PC-3 (cell line): ENCODE measurements at regions of chr4 and their contacts with region 1.

Region 1: GRCh38 chr4:61933527-61933926 is 733.4 kb downstream of the ADGRL3 start:
- DNase-seq: no peak
- ATAC-seq: peak; percentile 5; the same call in 1 of the 2 replicates
- H3K4me3 ChIP-seq: peak overlapping the region; percentile 14; the same call in 1 of the 2 replicates
- H3K27ac ChIP-seq: peak overlapping the region; percentile 63
- H3K4me1 ChIP-seq: peaks cover 28% of the 10 kb centered on the region
- H3K27me3 ChIP-seq: no peaks in the 10 kb centered on the region
- CTCF ChIP-seq: no peak

Region 2: GRCh38 chr4:60682901-60683300 is 1250.6 kb before region 1 on chr4:
- CTCF ChIA-PET with region 1: no interaction called
- POLR2A ChIA-PET with region 1: interaction called, 10 read pairs
- intact Hi-C with region 1: no loop called
- DNase-seq: peak; percentile 65
- ATAC-seq: peak; percentile 81
- H3K4me3 ChIP-seq: no peak overlapping the region
- H3K27ac ChIP-seq: peak overlapping the region; percentile 89
- H3K4me1 ChIP-seq: peaks cover 24% of the 10 kb centered on the region
- H3K27me3 ChIP-seq: no peaks in the 10 kb centered on the region
- CTCF ChIP-seq: no peak

Region 3: GRCh38 chr4:61571761-61572559 is 361.6 kb before region 1 on chr4:
- CTCF ChIA-PET with region 1: no interaction called
- POLR2A ChIA-PET with region 1: no interaction called
- intact Hi-C with region 1: loop called (anchors 5 kb)
- DNase-seq: peak; percentile 89
- ATAC-seq: peak; percentile 87
- H3K4me3 ChIP-seq: no peak overlapping the region
- H3K27ac ChIP-seq: peak overlapping the region; percentile 15; the same call in 1 of the 2 replicates
- H3K4me1 ChIP-seq: peaks cover 26% of the 10 kb centered on the region
- H3K27me3 ChIP-seq: no peaks in the 10 kb centered on the region
- CTCF ChIP-seq: no peak

Region 4: DNA sequence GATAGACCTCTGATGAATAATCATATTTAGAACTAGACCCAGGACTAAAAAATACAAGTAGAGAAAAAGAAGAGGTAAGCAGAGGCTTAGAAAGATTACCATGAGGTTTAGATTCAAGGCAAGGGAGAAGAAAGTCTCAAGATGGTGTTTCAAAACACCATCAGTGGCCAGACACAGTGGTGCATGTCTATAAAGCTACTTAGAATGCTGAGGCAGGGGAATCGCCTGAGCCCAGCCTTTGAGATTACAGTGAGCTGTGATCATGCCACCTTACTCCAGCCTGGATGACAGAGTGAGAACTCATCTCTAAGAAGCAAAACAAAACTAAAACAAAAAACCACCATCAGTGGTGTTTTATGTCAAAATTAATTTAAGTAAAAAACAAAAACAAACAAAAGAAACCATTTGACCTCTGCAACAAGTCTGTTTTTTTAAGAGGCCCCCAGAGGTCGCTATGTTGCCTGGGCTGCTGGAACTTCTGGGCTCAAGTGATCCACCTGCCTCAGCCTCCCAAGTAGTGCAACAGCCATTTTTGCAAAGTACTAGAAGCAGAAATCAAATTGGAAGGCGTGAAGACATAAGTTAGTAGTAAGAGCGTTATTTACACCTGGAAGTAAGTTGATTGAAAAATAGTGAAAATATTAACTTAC is 50.9 kb after region 1 on chr4:
- CTCF ChIA-PET with region 1: no interaction called
- POLR2A ChIA-PET with region 1: no interaction called
- intact Hi-C with region 1: no loop called
- DNase-seq: no peak
- ATAC-seq: no peak
- H3K4me3 ChIP-seq: no peak overlapping the region
- H3K27ac ChIP-seq: no peak overlapping the region
- H3K4me1 ChIP-seq: no peaks in the 10 kb centered on the region
- H3K27me3 ChIP-seq: no peaks in the 10 kb centered on the region
- CTCF ChIP-seq: peak; percentile 57

Region 5: GRCh38 chr4:62015043-62015739 is 81.7 kb after region 1 on chr4:
- CTCF ChIA-PET with region 1: no interaction called
- POLR2A ChIA-PET with region 1: no interaction called
- intact Hi-C with region 1: no loop called
- DNase-seq: peak; percentile 53
- ATAC-seq: peak; percentile 45
- H3K4me3 ChIP-seq: no peak overlapping the region
- H3K27ac ChIP-seq: no peak overlapping the region
- H3K4me1 ChIP-seq: peaks cover 4% of the 10 kb centered on the region; the same call in 1 of the 2 replicates
- H3K27me3 ChIP-seq: no peaks in the 10 kb centered on the region
- CTCF ChIP-seq: no peak